ENCODE measurements at regions of chr17 and their contacts with region 1.

Region 1: GRCh38 chr17:50026901-50027630 is 28.8 kb upstream of the ITGA3 start:
- DNase-seq: peak; percentile 73 to 78 (median 76)
- ATAC-seq: peak; percentile 89
- H3K4me3 ChIP-seq: no peak overlapping the region
- H3K27ac ChIP-seq: no peak overlapping the region
- H3K4me1 ChIP-seq: peaks cover 0 to 4% of the 10 kb centered on the region in 2 experiments; a peak in 2 of 5 replicates
- H3K27me3 ChIP-seq: peaks cover 0 to 5% of the 10 kb centered on the region in 2 experiments; a peak in 1 of 5 replicates
- CTCF ChIP-seq: peak; percentile 87 to 90 (median 89)
- EP300 ChIP-seq: no peak
- POLR2A ChIP-seq: no peak
- RAD21 ChIP-seq: peak; percentile 69 to 92

Region 2: DNA sequence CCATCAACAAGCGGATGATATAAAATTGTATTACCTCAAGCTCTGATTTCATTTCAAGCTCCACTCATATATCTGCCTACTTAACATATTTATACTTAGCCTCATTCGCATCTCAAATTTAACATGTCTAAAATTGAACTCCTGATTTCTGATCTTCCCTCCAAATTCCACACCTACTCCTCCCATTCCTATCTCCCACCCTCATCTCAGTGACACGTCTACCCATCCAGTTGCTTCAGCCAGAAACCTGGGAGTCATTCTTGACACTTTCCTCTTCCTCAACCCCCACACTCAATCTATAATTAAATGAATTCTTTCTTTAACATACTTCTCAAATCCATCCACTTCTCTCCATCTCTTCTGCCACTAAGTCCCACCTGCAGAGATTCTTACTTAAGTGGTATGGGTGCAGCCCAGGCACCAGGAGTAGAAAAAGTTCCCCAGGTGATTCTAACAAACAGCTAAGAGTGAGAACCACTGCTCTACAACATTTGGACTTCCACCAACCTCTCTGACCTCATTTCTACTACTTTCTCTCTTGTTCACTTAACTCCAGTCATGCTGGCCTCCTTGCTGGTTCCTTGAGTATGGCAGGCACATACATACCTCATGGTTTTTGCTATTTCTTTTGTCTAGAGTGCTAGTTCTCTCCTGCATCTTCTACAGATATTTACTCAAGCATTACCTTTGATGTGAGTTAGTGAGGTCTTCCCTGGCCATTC is 367.2 kb before region 1 on chr17:
- CTCF ChIA-PET with region 1: no interaction called
- POLR2A ChIA-PET with region 1: no interaction called
- in situ Hi-C with region 1: no loop called
- intact Hi-C with region 1: no loop called
- DNase-seq: no peak
- ATAC-seq: no peak
- H3K4me3 ChIP-seq: no peak overlapping the region
- H3K27ac ChIP-seq: no peak overlapping the region
- H3K4me1 ChIP-seq: peaks cover 0 to 2% of the 10 kb centered on the region in 2 experiments; a peak in 3 of 5 replicates
- H3K27me3 ChIP-seq: no peaks in the 10 kb centered on the region
- CTCF ChIP-seq: no peak
- EP300 ChIP-seq: no peak
- POLR2A ChIP-seq: no peak
- RAD21 ChIP-seq: no peak

Region 3: DNA sequence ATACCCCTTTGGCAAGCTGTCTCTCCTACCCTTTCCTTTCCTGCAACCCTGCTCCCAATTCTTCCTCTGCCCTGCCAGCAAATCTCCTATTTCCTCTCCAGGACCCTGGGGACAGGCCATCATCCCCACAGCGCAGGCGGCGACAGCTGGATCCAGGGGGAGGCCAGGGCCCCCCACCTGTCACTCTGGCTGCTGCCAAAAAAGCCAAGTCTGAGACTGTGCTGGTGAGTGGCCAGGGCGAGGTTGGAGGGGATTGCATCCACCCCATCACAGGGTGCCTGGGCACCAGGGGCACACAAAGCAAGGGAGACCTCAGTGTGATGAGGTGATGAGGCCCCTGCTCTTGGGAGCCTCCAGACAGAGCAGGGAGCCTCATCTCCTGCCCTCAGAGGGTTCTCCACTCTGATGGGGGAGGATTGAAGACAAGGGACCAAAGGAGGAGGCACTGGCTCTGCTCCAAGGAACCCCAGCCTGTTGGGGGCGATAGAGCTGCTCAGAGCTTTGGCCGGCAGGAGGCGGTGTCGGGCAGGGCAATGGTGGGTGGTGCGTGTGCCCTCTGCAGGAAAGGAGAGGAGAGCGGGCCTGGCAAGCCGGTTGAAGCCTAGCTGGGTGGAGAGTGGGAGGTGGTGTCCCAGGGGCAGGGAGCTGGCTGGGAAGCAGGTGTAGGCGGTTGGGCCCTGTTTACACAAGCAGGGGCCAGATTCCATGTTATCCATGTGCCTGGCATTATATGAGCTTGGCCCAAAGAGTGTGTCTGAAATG is 52.4 kb after region 1 on chr17:
- CTCF ChIA-PET with region 1: no interaction called
- POLR2A ChIA-PET with region 1: no interaction called
- in situ Hi-C with region 1: no loop called
- intact Hi-C with region 1: loop called (anchors 2 kb)
- DNase-seq: peak; percentile 67 to 76 (median 73)
- ATAC-seq: peak; percentile 92
- H3K4me3 ChIP-seq: no peak overlapping the region
- H3K27ac ChIP-seq: no peak overlapping the region
- H3K4me1 ChIP-seq: peaks cover 0 to 18% of the 10 kb centered on the region in 2 experiments; a peak in 1 of 5 replicates
- H3K27me3 ChIP-seq: peaks cover 12 to 29% of the 10 kb centered on the region in 2 experiments
- CTCF ChIP-seq: peak; percentile 99 to 100 (median 100)
- EP300 ChIP-seq: no peak
- POLR2A ChIP-seq: no peak
- RAD21 ChIP-seq: peak; percentile 31 to 73; a peak in 2 of 4 replicates

Region 4: DNA sequence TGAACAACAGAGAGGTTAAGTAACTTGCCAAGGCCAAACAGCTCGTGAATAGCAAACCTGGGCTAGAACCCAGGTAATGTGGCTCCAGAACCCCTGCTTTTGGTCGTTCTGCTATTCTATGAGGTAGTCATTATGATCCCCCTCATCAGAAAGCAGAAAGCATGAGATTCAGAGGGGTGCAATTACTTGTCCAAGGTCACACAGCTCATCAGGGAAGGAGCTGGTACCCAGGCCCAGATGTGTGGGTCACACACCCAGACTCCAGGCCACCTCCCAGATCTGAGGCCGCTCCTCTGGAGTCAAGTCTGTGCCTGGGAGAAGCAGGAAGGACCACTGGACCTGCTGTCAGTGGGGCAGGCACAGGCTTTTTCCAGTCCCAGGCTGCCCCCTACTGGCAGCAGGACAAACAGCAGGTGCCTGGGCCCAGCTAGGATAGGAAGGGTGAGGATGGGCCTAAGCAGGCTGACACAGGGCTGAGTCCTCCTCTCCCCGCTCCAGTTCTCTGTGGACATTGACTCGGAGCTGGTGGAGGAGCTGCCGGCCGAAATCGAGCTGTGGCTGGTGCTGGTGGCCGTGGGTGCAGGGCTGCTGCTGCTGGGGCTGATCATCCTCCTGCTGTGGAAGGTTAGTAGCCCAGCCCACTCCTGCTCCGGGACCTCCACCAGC is 60.3 kb after region 1 on chr17:
- CTCF ChIA-PET with region 1: interaction called, 35 read pairs
- POLR2A ChIA-PET with region 1: interaction called, 3 read pairs
- in situ Hi-C with region 1: no loop called
- intact Hi-C with region 1: loop called (anchors 1 kb)
- DNase-seq: peak; percentile 79 to 86 (median 82)
- ATAC-seq: peak; percentile 99
- H3K4me3 ChIP-seq: no peak overlapping the region
- H3K27ac ChIP-seq: no peak overlapping the region
- H3K4me1 ChIP-seq: peaks cover 0 to 3% of the 10 kb centered on the region in 2 experiments; a peak in 1 of 5 replicates
- H3K27me3 ChIP-seq: peaks cover 0 to 32% of the 10 kb centered on the region in 2 experiments; a peak in 3 of 5 replicates
- CTCF ChIP-seq: peak; percentile 91 to 97 (median 96)
- EP300 ChIP-seq: no peak
- POLR2A ChIP-seq: no peak
- RAD21 ChIP-seq: peak; percentile 84 to 92

Measured in K562 (cell line).